ENCODE measurements at regions of chr1 and their contacts with region 1.

Region 1: GRCh38 chr1:6602669-6603237 is at the start of gene KLHL21:
- DNase-seq: peak; percentile 92
- CTCF ChIP-seq: no peak

Region 2: GRCh38 chr1:6445062-6445763 is 157.5 kb before region 1 on chr1:
- CTCF ChIA-PET with region 1: no interaction called
- POLR2A ChIA-PET with region 1: no interaction called
- DNase-seq: no peak
- CTCF ChIP-seq: peak; percentile 58

Region 3: GRCh38 chr1:6579374-6580118 is 23.2 kb before region 1 on chr1 and contains the start of gene ZBTB48:
- CTCF ChIA-PET with region 1: interaction called, 16 read pairs
- POLR2A ChIA-PET with region 1: interaction called, 5 read pairs
- DNase-seq: peak; percentile 100
- CTCF ChIP-seq: no peak